Ascending aorta (tissue), 2 donors: ENCODE measurements at regions of chr1 and their contacts with region 1.

Region 1: DNA sequence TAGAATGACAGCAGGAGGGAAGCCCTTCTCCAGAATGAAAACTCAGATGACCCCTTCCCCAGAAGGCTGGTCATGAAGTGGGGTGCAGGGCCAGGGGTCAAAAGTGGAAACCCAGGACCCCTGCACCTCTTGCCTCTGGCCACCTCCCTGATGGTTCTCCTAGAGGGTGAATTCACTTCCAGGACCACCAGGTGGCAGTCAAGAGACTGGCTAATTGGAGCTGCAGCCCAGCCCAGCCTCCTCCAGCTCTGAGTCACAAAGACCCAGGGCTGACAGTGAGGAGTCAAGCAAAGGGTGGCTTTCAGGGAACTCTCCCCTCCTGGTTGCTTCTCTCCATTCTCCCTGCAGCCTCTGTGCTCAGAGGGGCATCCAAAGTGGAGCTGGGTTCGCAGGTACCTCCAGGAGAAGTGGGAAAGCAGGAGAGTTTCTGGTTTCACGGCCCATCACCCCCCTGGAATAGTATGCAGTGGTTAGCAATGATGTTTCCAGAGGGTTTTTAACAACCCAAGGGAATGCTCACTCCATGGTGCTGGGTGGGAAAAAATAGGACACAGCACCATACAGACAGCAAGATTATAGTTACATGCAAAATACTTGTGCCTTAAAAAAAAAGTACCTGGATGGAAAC is 6.1 kb upstream of the EPHB2 start:
- DNase-seq: peak; percentile 51 to 92
- H3K4me3 ChIP-seq: no peak overlapping the region
- H3K27ac ChIP-seq: no peak overlapping the region
- H3K4me1 ChIP-seq: no peaks in the 10 kb centered on the region
- H3K27me3 ChIP-seq: no peaks in the 10 kb centered on the region
- CTCF ChIP-seq: peak; percentile 88 to 91 (median 88)

Region 2: GRCh38 chr1:22451702-22452474 is 252.7 kb before region 1 on chr1 and contains the start of gene ZBTB40:
- intact Hi-C with region 1: no loop called
- DNase-seq: peak; percentile 84 to 98
- H3K4me3 ChIP-seq: peak within 1 kb of the TSS; percentile 98 to 99
- H3K27ac ChIP-seq: peak within 1 kb of the TSS; percentile 96 to 98
- H3K4me1 ChIP-seq: peaks cover 4 to 17% of the 10 kb centered on the region in 2 donors
- H3K27me3 ChIP-seq: no peaks in the 10 kb centered on the region
- CTCF ChIP-seq: no peak
- total RNA-seq, gene ZBTB40: 13.0 TPM

Region 3: GRCh38 chr1:22665752-22666151 is 38.8 kb before region 1 on chr1:
- intact Hi-C with region 1: no loop called
- DNase-seq: no peak
- H3K4me3 ChIP-seq: no peak overlapping the region
- H3K27ac ChIP-seq: no peak overlapping the region
- H3K4me1 ChIP-seq: no peaks in the 10 kb centered on the region
- H3K27me3 ChIP-seq: no peaks in the 10 kb centered on the region
- CTCF ChIP-seq: peak in 1 of 3 experiments; percentile 21

Region 4: DNA sequence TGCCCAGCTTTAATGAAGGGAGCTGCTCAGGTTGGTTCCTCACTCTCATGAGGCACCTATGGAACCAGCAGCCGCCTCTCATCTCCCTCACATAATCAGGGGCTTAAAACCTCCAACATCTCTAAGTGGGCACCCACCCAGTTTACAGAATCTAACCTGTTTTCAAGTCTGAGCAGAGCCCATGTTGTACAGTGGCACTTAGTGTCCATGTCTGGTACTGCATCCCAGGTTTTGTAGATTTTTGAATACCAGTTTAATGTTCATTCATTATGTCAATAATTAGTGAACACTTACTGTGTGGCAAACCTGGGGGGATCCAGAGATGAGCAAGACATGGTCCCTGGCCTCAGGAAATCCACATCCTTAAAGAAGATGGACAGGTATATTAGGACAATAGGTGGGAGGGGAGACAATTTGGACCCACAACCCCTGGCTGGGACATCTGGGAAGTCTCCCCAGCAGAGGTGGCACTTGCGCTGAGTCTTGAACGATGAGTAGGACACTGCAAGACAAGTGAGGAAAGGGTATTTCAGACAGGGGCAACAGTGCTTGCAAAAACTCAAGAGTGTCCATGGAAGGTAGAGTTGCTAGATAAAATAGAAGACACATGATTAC is 184.8 kb after region 1 on chr1:
- intact Hi-C with region 1: loop called (anchors 1 kb)
- DNase-seq: no peak
- H3K4me3 ChIP-seq: no peak overlapping the region
- H3K27ac ChIP-seq: no peak overlapping the region
- H3K4me1 ChIP-seq: no peaks in the 10 kb centered on the region
- H3K27me3 ChIP-seq: no peaks in the 10 kb centered on the region
- CTCF ChIP-seq: peak; percentile 56 to 83 (median 65)

Region 5: GRCh38 chr1:22930235-22930912 is 225.8 kb after region 1 on chr1:
- intact Hi-C with region 1: loop called (anchors 2 kb)
- DNase-seq: no peak
- H3K4me3 ChIP-seq: no peak overlapping the region
- H3K27ac ChIP-seq: no peak overlapping the region
- H3K4me1 ChIP-seq: no peaks in the 10 kb centered on the region
- H3K27me3 ChIP-seq: no peaks in the 10 kb centered on the region
- CTCF ChIP-seq: peak; percentile 25 to 50 (median 45)

Region 6: GRCh38 chr1:22969304-22969709 is 264.8 kb after region 1 on chr1:
- intact Hi-C with region 1: loop called (anchors 1 kb)
- DNase-seq: peak in 1 of 2 donors; percentile 16
- H3K4me3 ChIP-seq: no peak overlapping the region
- H3K27ac ChIP-seq: no peak overlapping the region
- H3K4me1 ChIP-seq: no peaks in the 10 kb centered on the region
- H3K27me3 ChIP-seq: no peaks in the 10 kb centered on the region
- CTCF ChIP-seq: no peak

Region 7: GRCh38 chr1:22983934-22984333 is 279.4 kb after region 1 on chr1:
- intact Hi-C with region 1: no loop called
- DNase-seq: no peak
- H3K4me3 ChIP-seq: no peak overlapping the region
- H3K27ac ChIP-seq: no peak overlapping the region
- H3K4me1 ChIP-seq: no peaks in the 10 kb centered on the region
- H3K27me3 ChIP-seq: no peaks in the 10 kb centered on the region
- CTCF ChIP-seq: no peak